Transverse colon (tissue), 4 donors: ENCODE measurements at regions of chr3 and their contacts with region 1.

Region 1: DNA sequence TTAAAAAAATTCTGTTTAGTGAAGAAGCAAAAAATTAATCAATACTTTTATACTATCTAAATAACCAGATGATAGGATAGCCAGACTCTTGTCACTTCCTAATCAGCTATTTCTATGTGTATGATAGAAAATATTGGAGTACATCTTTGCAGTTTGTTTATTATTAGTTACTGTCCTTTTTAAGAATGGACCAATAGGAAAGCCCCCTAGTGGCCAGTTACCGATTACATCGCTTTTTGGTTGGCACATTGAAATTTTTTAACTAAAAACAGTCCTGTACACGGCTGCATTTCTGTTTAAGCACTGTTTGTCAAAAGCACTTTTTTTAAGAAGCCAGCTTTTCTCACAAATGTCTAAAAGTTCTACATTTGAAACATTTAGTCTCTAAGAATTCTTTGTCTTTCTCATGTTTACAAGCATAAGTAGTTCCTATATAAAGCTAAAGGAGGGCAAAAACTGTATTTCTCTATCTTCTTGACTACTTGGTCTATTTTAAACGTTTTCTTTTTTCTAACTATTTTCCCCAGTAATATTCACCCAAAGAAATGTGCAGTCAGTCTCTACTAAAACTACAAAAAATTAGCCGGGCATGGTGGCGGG is 253.2 kb upstream of the LRTM1 start:
- DNase-seq: no peak
- H3K4me3 ChIP-seq: no peak overlapping the region
- H3K27ac ChIP-seq: no peak overlapping the region
- H3K4me1 ChIP-seq: no peaks in the 10 kb centered on the region
- H3K27me3 ChIP-seq: no peaks in the 10 kb centered on the region
- CTCF ChIP-seq: peak; percentile 53 to 81 (median 72)
- EP300 ChIP-seq: no peak
- POLR2A ChIP-seq: no peak

Region 2: DNA sequence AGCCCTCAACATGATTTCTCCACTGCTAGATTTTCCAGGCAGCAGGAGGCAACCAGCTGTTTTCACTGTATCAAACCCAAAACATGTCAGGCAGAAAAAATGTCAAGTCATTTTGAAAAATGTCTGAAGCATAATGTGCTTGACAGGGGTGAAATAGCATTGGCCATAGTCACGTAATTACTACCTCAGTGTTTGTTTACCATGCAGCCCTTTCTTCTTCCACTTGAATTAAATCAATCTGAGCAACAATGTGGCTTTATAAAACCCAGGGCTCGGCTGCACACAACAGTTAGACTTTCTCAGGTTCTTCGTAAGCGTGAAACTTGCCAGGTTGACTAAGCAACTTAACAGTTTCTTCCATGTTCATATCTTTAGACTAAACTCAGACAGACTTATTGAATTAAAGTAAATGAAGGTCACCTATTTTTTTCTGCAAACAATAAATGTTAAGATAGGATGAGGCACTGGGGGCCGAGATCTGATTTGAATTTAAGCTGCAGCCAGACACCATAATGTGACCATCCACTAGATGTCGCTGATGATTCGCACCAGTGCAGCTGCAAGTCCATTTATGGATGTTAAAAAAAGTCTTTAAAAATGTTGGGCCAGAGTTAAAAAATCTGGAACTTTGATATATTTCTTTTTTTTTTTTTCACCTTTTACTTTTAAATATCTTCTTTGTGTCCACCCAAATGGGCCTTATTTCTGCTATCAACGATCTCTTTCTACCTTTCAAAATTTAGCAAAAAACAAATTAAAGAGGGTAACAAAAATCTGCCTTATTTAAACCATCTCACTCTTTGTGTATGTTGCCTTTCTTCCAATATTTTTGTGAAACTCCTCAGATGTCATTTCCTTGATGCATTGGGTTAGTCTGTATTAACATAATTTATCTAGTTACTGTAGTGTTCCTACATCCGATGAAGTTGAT is 752.8 kb before region 1 on chr3:
- in situ Hi-C with region 1: loop called in 1 of 4 experiments (anchors 25 kb)
- intact Hi-C with region 1: no loop called
- DNase-seq: peak; percentile 53
- H3K4me3 ChIP-seq: no peak overlapping the region
- H3K27ac ChIP-seq: peak overlapping the region in 1 of 4 donors; percentile 2
- H3K4me1 ChIP-seq: peaks cover 0 to 6% (median 2%) of the 10 kb centered on the region in 4 donors
- H3K27me3 ChIP-seq: no peaks in the 10 kb centered on the region
- CTCF ChIP-seq: peak; percentile 71 to 85 (median 76)
- EP300 ChIP-seq: no peak
- POLR2A ChIP-seq: no peak

Region 3: GRCh38 chr3:54853573-54854404 is 327.2 kb before region 1 on chr3:
- in situ Hi-C with region 1: loop called in 2 of 4 experiments (anchors 25 kb)
- intact Hi-C with region 1: no loop called
- DNase-seq: peak; percentile 72
- H3K4me3 ChIP-seq: no peak overlapping the region
- H3K27ac ChIP-seq: no peak overlapping the region
- H3K4me1 ChIP-seq: peaks cover 0 to 9% (median 2%) of the 10 kb centered on the region in 4 donors
- H3K27me3 ChIP-seq: no peaks in the 10 kb centered on the region
- CTCF ChIP-seq: peak; percentile 80 to 87 (median 83)
- EP300 ChIP-seq: no peak
- POLR2A ChIP-seq: no peak

Region 4: DNA sequence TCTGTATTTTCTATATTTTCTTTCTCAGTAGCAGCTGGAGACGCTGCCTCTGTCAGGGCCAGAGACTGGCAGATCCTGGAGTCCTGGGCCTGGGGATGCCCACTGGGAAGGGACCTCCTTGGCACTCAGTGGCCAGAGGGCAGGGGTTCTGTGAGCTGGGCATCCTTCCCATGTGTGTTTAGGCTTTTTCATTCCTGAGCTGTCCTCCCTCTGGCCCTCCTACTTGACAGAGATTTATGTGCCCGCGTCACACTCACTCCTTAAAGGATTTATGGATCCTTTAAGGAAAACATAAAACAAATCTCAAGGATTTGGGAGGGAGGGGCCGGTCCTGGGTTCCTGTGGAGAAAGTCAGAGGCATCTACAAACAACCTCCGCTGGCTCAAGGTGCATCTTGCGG is 188.4 kb after region 1 on chr3:
- in situ Hi-C with region 1: no loop called
- intact Hi-C with region 1: no loop called
- DNase-seq: no peak
- H3K4me3 ChIP-seq: no peak overlapping the region
- H3K27ac ChIP-seq: no peak overlapping the region
- H3K4me1 ChIP-seq: peaks cover 0 to 4% (median 0%) of the 10 kb centered on the region in 4 donors
- H3K27me3 ChIP-seq: no peaks in the 10 kb centered on the region
- CTCF ChIP-seq: no peak
- EP300 ChIP-seq: no peak
- POLR2A ChIP-seq: no peak